PC-9 (cell line): ENCODE measurements at regions of chr19 and their contacts with region 1.

Region 1: GRCh38 chr19:24159707-24160106 is 72.7 kb downstream of the ZNF254 start:
- DNase-seq: peak; percentile 3 to 43
- H3K4me3 ChIP-seq: no peak overlapping the region
- H3K27ac ChIP-seq: no peak overlapping the region
- H3K4me1 ChIP-seq: no peaks in the 10 kb centered on the region
- H3K27me3 ChIP-seq: no peaks in the 10 kb centered on the region
- CTCF ChIP-seq: peak; percentile 71

Region 2: GRCh38 chr19:23867895-23868294 is 291.8 kb before region 1 on chr19:
- CTCF ChIA-PET with region 1: no interaction called
- POLR2A ChIA-PET with region 1: no interaction called
- intact Hi-C with region 1: loop called (anchors 2 kb)
- DNase-seq: no peak
- H3K4me3 ChIP-seq: no peak overlapping the region
- H3K27ac ChIP-seq: no peak overlapping the region
- H3K4me1 ChIP-seq: no peaks in the 10 kb centered on the region
- H3K27me3 ChIP-seq: no peaks in the 10 kb centered on the region
- CTCF ChIP-seq: no peak